Astrocyte of the cerebellum (primary cell): ENCODE measurements at regions of chr16 and their contacts with region 1.

Region 1: GRCh38 chr16:77236063-77236511 is 36.9 kb downstream of the SYCE1L start:
- DNase-seq: peak; percentile 64
- H3K4me3 ChIP-seq: peak overlapping the region; percentile 0
- CTCF ChIP-seq: peak; percentile 97

Region 2: DNA sequence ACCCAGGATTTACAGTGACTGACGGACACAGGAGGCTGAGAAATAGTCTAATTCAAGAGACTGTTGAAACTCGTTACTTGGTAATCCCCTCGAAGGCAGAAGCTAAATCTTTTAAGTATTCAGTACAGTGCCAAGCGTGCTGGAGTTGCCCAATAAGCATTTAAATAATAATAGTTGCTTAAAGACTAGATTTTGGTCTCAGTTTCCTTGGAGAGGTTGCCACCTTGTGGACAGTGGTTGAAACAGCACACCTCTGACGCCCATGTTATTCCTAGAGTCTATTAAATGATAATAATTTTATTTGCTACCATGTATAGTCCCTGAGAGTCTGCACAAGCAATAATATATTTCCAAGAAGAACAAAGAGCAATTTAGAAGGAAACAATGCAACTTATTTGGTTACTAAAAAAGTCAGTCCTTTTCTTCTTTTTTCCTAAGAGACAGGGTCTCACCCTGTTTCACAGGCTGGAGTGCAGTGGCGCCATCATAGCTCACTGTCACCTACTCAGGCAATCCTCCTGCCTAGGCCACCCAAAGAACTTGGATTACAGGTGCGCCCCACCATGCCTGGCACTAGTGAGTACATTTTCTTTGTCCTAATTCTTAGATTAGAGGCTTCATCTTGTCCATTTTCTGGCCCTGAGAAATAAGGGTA is 348.2 kb after region 1 on chr16:
- in situ Hi-C with region 1: loop called (anchors 5 kb)
- DNase-seq: peak; percentile 73
- H3K4me3 ChIP-seq: no peak overlapping the region
- CTCF ChIP-seq: peak; percentile 86